ENCODE measurements at regions of chr1 and their contacts with region 1.

Region 1: DNA sequence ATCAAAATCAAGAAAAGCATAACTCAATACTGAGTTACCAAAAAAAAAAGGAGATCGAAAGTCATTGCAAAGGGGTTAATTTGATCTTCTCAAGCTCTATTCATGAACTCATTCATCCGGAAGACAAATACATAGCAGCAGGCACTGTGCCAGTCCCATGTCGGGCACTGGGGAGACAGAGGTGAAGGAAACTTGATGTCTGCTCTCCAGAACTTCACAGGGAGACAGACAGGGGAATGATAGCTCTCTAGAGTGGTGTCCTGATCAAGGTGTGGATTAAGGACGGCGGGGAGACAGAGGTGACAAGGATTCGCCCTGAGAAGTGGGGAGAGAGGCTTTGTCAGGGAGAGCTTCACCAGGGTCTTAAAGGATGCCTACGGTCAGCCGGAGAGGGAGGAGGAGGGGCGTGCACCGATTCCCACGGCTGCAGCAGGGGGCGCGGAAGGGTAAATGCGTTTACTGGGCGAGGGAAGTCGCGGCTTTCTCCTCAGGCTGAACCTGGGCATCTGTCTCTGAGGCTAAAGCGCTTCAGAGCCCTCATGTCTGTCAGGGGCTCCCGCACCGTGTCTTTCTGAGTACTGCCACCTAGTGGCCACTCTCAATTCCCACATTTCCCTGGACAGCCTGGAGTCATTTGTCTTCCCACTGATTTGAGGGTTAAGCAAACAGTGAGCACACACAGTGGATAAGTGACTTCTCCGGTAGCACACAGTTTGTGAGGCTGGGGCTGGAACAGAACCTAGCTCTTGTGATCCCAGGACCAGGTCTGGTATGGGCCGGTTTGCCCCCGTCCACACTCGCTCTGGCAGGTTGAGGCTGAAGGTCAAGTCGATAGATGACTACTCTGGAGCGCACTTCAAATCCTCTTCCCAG is 152.8 kb downstream of the TENT5C start:
- DNase-seq: peak; percentile 90
- H3K4me3 Mint-ChIP-seq: peak overlapping the region; percentile 84
- H3K27ac Mint-ChIP-seq: no peak overlapping the region
- H3K4me1 Mint-ChIP-seq: peaks cover 8% of the 10 kb centered on the region
- H3K27me3 Mint-ChIP-seq: peaks cover 39% of the 10 kb centered on the region

Region 2: DNA sequence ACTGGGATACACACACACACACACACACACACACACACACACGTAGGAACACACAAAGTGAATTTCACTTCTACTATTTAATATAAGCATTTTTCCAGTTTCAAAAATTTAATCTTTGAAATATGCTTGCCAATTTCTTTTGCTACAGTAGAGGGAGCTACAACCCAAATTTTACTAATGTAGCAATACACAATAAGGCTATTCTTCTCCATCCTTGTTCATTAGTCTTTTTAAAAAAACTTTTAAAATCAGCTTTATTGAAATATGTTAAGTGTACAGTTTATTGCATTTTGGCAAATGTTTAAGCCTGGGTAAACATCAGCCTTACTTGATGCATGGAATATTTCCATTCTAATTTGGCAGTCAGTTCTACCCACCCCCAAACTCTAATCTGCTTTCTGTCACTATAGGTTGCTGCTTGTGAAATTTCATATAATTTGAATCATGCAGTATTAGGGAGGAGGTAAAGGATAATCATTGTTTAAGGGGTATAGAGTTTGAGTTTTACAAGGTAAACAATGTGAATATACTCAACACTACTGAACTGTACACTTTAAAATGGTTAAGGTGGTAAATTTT is 245.8 kb before region 1 on chr1:
- intact Hi-C with region 1: loop called (anchors 1 kb)
- DNase-seq: no peak
- H3K4me3 Mint-ChIP-seq: no peak overlapping the region
- H3K27ac Mint-ChIP-seq: no peak overlapping the region
- H3K4me1 Mint-ChIP-seq: peaks cover 2% of the 10 kb centered on the region
- H3K27me3 Mint-ChIP-seq: no peaks in the 10 kb centered on the region

Region 3: GRCh38 chr1:117654493-117655219 is 104.0 kb before region 1 on chr1:
- intact Hi-C with region 1: loop called (anchors 5 kb)
- DNase-seq: peak; percentile 75
- H3K4me3 Mint-ChIP-seq: peak overlapping the region; percentile 72
- H3K27ac Mint-ChIP-seq: peak overlapping the region; percentile 77
- H3K4me1 Mint-ChIP-seq: peaks cover 80% of the 10 kb centered on the region
- H3K27me3 Mint-ChIP-seq: peaks cover 12% of the 10 kb centered on the region

Region 4: GRCh38 chr1:117674521-117675397 is 83.9 kb before region 1 on chr1:
- intact Hi-C with region 1: loop called (anchors 5 kb)
- DNase-seq: peak; percentile 85
- H3K4me3 Mint-ChIP-seq: no peak overlapping the region
- H3K27ac Mint-ChIP-seq: no peak overlapping the region
- H3K4me1 Mint-ChIP-seq: peaks cover 21% of the 10 kb centered on the region
- H3K27me3 Mint-ChIP-seq: peaks cover 22% of the 10 kb centered on the region

Region 5: DNA sequence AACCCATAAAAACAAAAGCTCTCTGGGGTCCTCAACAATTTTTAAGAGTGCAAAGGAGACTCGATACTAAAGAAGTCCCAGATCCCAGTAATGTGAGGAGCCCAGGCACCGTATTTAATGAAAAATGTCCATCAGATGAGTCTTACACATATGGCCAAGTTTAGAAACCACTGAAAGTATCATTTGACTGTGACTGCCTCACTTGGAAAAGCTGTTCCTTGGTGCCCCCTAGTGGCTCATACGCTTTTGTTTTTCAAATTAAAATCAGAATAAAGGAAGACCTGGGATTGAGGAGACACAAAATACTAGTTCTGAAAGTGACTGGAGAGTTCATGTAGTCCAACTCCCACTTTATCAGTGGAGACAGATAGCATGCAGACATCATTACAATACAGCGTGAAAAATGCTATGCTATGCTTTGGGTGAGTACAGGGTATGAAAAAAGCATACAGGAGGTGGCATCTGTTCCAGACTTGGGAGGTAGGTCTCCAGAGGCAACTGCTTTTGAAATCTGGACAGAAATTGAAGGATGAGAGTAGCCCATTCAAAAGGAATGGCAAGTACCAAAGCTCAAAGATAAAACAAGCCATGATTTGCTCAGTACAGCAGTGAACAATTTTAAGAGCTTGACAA is 136.9 kb after region 1 on chr1:
- intact Hi-C with region 1: loop called (anchors 5 kb)
- DNase-seq: peak; percentile 88
- H3K4me3 Mint-ChIP-seq: no peak overlapping the region
- H3K27ac Mint-ChIP-seq: no peak overlapping the region
- H3K4me1 Mint-ChIP-seq: no peaks in the 10 kb centered on the region
- H3K27me3 Mint-ChIP-seq: no peaks in the 10 kb centered on the region

Measured in activated CD4-positive, alpha-beta T cell treated with anti-CD3 and anti-CD28 coated beads, Interleukin-2, amount 10 ng/mL, durations not matched to agents 24 days and 14 days (primary cell).